Activated T-helper 2 cell treated with anti-CD3 and anti-CD28 coated beads, Interferon-gamma antibody, Interleukin-2, Interleukin-4, amounts not matched to agents 10 μg/mL and 5 μg/mL and 100 μg/mL, durations not matched to agents 14 hours and 24 hours and 36 hours (primary cell): ENCODE measurements at regions of chr11 and their contacts with region 1.

Region 1: DNA sequence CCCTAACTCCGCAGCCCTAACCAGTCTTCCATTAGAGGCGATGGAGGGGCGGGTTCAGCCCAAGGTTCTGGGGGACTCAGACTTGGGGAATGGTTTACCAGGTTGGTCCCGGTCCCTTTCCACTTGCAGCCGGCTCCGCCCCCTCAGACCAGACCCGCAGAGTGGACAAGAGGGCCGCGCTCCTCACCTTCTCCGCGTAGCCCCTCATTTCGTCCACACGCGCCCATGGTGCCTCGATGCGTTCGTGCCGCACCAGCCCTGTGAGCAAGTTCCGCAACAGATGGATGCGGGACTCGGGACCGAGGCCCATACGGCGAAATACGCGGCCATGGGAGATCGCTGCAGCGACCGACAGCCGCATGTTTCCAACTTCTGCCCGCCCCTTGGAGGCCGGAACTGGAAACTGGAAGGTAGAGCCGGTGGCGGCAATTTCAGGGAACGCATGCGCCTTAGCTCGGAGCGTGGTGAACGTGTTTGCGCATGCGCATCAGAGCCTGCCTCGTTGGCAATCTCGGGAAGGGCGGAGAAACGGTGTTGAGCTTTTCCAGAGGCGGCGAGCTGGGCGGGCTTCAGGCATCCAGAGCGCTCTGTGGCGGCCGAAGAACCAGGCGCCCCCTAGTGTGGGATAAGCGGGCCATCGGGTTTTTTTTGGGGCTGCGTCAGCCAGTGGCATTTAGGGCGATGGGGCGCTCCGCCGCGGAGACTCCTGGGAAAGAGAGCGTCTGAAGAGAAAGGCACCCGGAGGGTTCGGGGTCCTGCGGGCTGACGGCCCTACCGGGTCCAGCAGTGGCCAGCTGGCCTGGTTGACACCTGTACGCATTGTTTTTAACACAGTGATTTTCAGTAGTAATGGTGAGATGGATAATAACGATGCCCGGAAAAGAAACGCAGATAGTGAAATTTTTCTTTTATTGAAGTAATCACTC is at the start of gene MRPL17:
- DNase-seq: peak; percentile 100
- H3K4me3 Mint-ChIP-seq: peak within 1 kb of the TSS; percentile 97
- H3K27ac Mint-ChIP-seq: peak within 1 kb of the TSS; percentile 98
- H3K4me1 Mint-ChIP-seq: peaks cover 20% of the 10 kb centered on the region
- H3K27me3 Mint-ChIP-seq: no peaks in the 10 kb centered on the region
- total RNA-seq, gene MRPL17: 103 and 108 TPM in 2 replicates

Region 2: GRCh38 chr11:6419009-6419631 is 264.1 kb before region 1 on chr11 and contains the start of gene APBB1:
- intact Hi-C with region 1: loop called (anchors 10 kb)
- DNase-seq: peak; percentile 68
- H3K4me3 Mint-ChIP-seq: peak within 1 kb of the TSS; percentile 72
- H3K27ac Mint-ChIP-seq: peak within 1 kb of the TSS; percentile 25
- H3K4me1 Mint-ChIP-seq: peaks cover 4% of the 10 kb centered on the region
- H3K27me3 Mint-ChIP-seq: peaks cover 31% of the 10 kb centered on the region
- total RNA-seq, gene APBB1: 31.0 and 33.0 TPM in 2 replicates

Region 3: DNA sequence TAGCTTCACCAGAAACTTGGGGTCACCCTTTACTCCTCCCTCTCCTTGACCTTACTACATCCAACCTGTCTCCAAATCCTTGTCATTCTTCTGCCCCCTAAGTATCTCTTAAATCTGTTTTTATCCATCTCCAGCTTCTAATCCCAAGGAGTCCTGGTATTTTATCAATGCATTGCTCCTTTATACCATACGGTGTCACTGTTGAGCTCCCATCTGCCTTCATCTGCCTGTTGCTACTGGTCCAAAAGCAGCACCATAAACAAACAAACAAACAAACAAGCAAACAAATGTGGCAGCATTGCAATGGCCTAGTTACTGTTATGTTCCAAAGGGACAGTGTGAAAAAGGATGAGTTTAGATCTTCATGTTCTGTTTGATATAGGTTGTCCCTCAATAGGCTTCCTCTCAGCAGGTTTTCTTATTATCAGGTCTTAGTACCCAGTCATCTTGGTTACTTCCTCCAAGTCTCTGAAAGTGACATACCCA is 151.9 kb before region 1 on chr11:
- intact Hi-C with region 1: loop called (anchors 1 kb)
- DNase-seq: no peak
- H3K4me3 Mint-ChIP-seq: no peak overlapping the region
- H3K27ac Mint-ChIP-seq: no peak overlapping the region
- H3K4me1 Mint-ChIP-seq: peaks cover 12% of the 10 kb centered on the region
- H3K27me3 Mint-ChIP-seq: no peaks in the 10 kb centered on the region

Region 4: DNA sequence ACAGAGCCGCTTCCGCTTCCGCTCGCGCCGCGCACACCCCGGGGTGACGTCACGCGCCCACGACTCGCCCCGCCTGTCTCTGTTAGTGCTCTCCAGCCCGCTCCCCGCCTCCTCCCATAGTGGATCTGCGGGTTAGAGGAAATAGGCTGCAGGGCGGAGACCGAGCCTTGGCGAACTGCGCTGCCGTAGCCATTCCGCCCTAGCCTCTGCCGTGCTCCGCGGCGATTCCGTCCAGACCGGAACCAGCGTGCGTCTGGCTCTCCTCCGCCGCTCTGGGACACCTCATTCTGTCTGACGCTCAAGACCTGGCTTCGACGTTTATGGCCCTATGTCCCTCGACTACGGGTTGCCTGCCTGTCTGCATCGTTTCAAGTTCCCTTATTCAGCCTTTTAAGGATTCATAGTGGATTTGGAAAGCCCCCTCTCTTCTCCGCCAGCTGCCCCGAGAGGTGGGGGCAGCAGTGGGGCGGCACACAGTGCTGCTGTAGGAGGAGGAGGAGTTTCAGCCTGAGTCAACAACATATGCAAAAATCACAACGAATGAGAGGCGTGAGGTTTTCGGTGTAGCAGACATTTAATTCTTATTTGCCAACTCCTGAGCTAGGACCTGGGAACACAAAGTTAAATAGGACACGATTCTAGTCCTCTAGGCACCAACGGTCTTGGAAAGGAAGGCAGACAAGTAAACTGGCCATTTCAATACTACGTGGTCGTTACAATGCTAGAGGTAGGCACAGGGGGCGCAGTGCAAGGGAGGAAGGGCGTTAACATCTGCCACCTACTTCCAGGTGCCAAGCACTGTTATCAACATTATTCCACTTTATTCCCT is 70.8 kb before region 1 on chr11 and contains the start of gene TAF10:
- intact Hi-C with region 1: loop called (anchors 1 kb)
- DNase-seq: peak; percentile 95
- H3K4me3 Mint-ChIP-seq: peak within 1 kb of the TSS; percentile 95
- H3K27ac Mint-ChIP-seq: peak within 1 kb of the TSS; percentile 83
- H3K4me1 Mint-ChIP-seq: peaks cover 30% of the 10 kb centered on the region
- H3K27me3 Mint-ChIP-seq: no peaks in the 10 kb centered on the region
- total RNA-seq, gene TAF10: 134 and 142 TPM in 2 replicates

Region 5: GRCh38 chr11:6667733-6668374 is 15.3 kb before region 1 on chr11:
- intact Hi-C with region 1: loop called (anchors 1 kb)
- DNase-seq: peak; percentile 29
- H3K4me3 Mint-ChIP-seq: no peak overlapping the region
- H3K27ac Mint-ChIP-seq: no peak overlapping the region
- H3K4me1 Mint-ChIP-seq: peaks cover 50% of the 10 kb centered on the region
- H3K27me3 Mint-ChIP-seq: peaks cover 3% of the 10 kb centered on the region

Region 6: DNA sequence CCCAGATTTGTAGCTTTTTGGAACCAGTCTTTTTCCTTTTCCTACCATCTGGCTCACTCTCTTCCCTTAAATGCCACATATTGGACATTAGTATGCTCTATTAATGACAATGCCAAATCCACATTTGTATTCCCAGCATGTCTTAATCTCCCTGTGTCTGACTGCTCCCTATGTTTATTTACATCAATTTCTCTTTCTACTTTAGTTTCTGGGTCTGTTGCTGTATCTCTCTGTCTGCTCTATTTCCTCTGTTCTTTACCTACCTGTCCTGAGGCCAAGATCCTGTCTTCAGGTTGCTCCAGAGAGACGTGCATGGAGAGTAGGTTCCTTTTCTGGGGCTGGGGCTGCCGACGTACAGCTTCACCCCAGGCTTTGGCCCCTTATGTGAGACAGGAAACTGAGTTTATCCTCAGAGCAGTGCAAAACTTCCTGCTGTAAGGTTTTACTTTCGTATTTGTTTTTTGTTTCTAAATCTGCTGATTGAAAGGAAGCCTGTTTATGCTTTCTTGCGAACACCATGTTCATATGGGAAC is 63.0 kb after region 1 on chr11:
- intact Hi-C with region 1: loop called (anchors 5 kb)
- DNase-seq: peak; percentile 49
- H3K4me3 Mint-ChIP-seq: no peak overlapping the region
- H3K27ac Mint-ChIP-seq: no peak overlapping the region
- H3K4me1 Mint-ChIP-seq: peaks cover 24% of the 10 kb centered on the region
- H3K27me3 Mint-ChIP-seq: no peaks in the 10 kb centered on the region

Region 7: GRCh38 chr11:6771926-6772893 is 89.0 kb after region 1 on chr11 and contains the start of gene OR2AG2:
- intact Hi-C with region 1: no loop called
- DNase-seq: no peak
- H3K4me3 Mint-ChIP-seq: no peak within 1 kb of the TSS
- H3K27ac Mint-ChIP-seq: no peak within 1 kb of the TSS
- H3K4me1 Mint-ChIP-seq: peaks cover 2% of the 10 kb centered on the region
- H3K27me3 Mint-ChIP-seq: peaks cover 17% of the 10 kb centered on the region
- total RNA-seq, gene OR2AG2: 0.34 and 0.60 TPM in 2 replicates